ENCODE measurements at regions of chr3 and their contacts with region 1.

Region 1: GRCh38 chr3:173920386-173920785 is 522.8 kb downstream of the NLGN1 start:
- DNase-seq: no peak

Region 2: DNA sequence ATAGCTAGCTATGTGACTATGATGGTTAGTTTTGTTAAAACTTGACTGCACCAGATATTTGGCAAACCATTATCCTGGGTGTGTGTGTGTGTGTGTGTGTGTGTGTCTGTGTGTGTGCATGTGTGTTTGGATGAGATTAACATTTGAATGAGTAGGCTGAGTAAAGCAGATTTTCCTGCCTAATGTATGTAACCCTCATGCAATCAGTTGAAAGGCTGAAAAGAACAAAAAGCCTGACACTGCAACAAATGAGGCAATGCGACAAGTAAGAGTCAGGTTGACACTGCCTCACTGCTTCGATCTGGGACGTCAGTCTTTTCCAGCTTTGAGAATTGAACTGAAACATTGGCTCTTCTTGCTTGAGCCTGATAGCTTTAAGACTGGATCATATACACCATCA is 1581.8 kb after region 1 on chr3:
- intact Hi-C with region 1: loop called (anchors 10 kb)
- DNase-seq: no peak

Measured in posterior cingulate gyrus (tissue), 11 donors.